PC-3 (cell line): ENCODE measurements at regions of chr7 and their contacts with region 1.

Region 1: DNA sequence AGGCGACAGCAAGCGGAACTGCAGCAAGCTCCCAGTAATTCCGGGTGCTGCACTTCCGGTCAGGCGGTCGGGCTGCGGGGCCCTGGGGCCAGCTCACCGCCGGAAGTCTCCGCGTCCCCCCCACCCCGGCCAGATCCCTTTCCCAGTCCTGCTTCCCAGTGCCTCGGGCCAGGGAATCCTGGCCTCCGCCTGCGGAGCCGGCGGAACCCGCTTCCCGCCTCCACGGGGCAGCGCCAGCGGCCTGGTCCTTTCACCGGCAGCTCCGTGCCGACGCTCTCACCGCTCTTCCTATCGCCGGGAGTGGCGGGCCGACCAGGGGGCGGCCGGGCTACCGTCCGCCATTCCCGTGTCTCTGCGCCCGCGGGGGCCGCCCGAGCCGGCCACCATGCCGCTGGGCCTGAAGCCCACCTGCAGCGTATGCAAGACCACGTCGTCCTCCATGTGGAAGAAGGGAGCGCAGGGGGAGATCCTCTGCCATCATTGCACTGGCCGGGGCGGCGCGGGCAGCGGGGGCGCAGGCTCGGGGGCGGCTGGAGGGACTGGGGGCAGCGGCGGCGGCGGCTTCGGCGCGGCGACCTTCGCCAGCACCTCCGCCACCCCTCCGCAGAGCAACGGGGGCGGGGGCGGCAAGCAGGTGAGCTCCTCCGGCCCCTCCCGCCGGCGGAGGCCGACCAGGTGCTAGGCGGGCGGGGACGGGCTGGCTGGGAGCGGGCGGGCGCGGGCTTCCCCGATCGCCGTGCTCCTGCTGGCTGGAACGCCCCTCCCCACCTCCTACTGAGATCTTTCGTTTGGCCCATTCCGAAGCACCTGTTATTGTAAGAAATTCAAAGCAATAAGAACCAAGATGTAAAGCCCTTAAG is at the start of gene GATAD1:
- DNase-seq: peak; percentile 89
- ATAC-seq: peak; percentile 90
- H3K4me3 ChIP-seq: peak within 1 kb of the TSS; percentile 93
- H3K27ac ChIP-seq: peak within 1 kb of the TSS; percentile 61
- H3K4me1 ChIP-seq: peaks cover 15% of the 10 kb centered on the region
- H3K27me3 ChIP-seq: no peaks in the 10 kb centered on the region
- CTCF ChIP-seq: peak; percentile 80
- total RNA-seq, gene GATAD1: 15.8 and 20.0 TPM in 2 replicates

Region 2: DNA sequence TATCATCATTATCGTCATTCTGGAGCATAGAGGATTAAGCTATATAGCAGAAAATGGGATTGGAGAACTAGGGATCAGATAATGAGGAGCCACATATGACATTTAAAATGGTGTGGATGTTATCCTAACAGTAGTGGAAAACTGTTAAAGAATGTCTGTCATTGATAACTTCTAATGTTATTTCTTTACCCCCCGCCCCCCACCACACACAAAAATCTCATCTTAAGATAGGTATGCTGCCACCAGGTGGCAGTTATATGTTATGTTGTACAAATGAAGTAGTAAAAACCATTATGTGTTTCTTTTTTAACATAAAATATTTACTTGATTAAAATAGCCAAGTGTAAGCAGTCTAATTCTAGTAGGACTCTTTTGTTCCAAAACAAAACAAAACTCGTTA is 494.0 kb before region 1 on chr7:
- CTCF ChIA-PET with region 1: no interaction called
- POLR2A ChIA-PET with region 1: no interaction called
- intact Hi-C with region 1: loop called (anchors 5 kb)
- DNase-seq: peak; percentile 18
- ATAC-seq: no peak
- H3K4me3 ChIP-seq: no peak overlapping the region
- H3K27ac ChIP-seq: no peak overlapping the region
- H3K4me1 ChIP-seq: peaks cover 14% of the 10 kb centered on the region
- H3K27me3 ChIP-seq: no peaks in the 10 kb centered on the region
- CTCF ChIP-seq: peak; percentile 66

Region 3: DNA sequence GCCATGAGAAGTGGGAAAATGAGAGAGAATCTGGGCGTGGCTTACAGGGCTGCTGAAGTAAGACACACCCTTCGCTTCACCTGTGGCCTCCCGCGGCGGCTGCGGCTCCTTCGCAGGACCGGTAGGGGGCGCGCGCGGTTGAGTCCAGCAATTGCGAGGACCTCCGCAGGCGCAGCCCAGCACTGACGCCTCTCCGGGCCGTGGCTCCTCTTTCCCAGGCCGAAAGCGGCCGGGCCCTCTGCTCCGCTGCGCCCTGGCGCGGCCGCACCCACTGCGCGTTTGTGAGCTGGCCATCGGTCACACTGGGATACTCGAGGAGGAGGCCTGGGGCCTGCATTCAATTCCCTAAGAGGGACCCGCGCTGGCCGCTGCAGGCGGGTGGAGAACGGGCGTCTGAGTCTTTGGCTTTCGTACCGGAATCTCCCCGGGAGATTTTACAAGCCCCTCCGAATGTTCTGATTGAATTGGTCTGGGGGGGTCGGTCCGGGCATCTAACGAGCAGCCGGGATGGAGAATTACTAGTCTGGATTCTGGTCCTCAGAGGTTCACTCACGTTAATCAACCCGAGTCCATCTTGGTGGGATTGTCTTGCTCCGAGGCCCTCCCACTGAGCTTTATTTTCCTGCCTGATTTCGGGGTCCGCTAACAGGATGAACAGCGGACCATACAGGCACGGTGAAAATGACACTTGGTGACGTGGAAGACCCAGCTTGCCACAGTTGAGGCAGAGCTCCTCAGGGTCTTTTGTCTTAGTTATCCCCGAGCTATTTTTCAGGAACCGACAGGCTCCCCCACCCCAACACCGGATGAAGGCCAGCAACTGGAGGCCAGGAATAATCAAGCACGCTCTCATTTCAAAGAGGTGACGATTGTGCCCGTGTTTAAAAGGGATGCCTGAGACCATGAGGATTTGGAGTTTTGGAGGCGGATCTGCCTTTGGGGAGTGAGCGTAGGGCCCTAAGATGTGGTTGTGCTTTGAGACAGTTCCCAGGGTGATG is 268.3 kb before region 1 on chr7 and contains the start of gene LRRD1:
- CTCF ChIA-PET with region 1: interaction called, 4 read pairs
- POLR2A ChIA-PET with region 1: no interaction called
- intact Hi-C with region 1: loop called (anchors 2 kb)
- DNase-seq: peak; percentile 86
- ATAC-seq: peak; percentile 98
- H3K4me3 ChIP-seq: peak within 1 kb of the TSS; percentile 63
- H3K27ac ChIP-seq: no peak within 1 kb of the TSS
- H3K4me1 ChIP-seq: peaks cover 9% of the 10 kb centered on the region
- H3K27me3 ChIP-seq: no peaks in the 10 kb centered on the region
- CTCF ChIP-seq: peak; percentile 88
- total RNA-seq, gene LRRD1: not detected in 2 replicates

Region 4: GRCh38 chr7:92425321-92425947 is 22.1 kb before region 1 on chr7:
- CTCF ChIA-PET with region 1: interaction called, 26 read pairs
- POLR2A ChIA-PET with region 1: no interaction called
- intact Hi-C with region 1: loop called (anchors 1 kb)
- DNase-seq: no peak
- ATAC-seq: no peak
- H3K4me3 ChIP-seq: no peak overlapping the region
- H3K27ac ChIP-seq: no peak overlapping the region
- H3K4me1 ChIP-seq: no peaks in the 10 kb centered on the region; the same call in 1 of the 2 replicates
- H3K27me3 ChIP-seq: no peaks in the 10 kb centered on the region
- CTCF ChIP-seq: no peak

Region 5: DNA sequence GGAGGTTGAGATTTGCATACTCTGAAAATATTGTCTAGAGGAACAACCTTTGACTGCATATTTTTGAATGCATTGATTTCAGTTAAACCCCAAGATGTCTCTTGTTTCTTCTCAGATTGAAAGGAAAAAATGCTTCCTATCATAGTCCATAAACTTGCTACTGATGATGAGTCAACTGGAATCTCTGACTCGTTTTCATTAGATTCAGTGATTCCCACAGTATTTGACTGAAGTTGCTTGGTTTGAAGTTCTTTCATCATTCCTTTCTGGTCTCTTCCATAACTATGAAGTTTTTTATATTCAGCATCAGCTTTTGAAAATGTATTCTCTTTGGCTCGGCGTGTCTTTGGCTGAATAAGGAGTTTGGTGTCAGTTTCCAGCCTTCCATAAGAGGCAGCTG is 70.1 kb after region 1 on chr7:
- CTCF ChIA-PET with region 1: no interaction called
- POLR2A ChIA-PET with region 1: no interaction called
- intact Hi-C with region 1: no loop called
- DNase-seq: peak; percentile 4
- ATAC-seq: no peak
- H3K4me3 ChIP-seq: no peak overlapping the region
- H3K27ac ChIP-seq: no peak overlapping the region
- H3K4me1 ChIP-seq: no peaks in the 10 kb centered on the region
- H3K27me3 ChIP-seq: no peaks in the 10 kb centered on the region
- CTCF ChIP-seq: no peak

Region 6: GRCh38 chr7:92528188-92528957 is 80.8 kb after region 1 on chr7 and contains the starts of genes PEX1 and RBM48:
- CTCF ChIA-PET with region 1: interaction called, 8 read pairs
- POLR2A ChIA-PET with region 1: interaction called, 12 read pairs
- intact Hi-C with region 1: no loop called
- DNase-seq: peak; percentile 98
- ATAC-seq: peak; percentile 94
- H3K4me3 ChIP-seq: peak within 1 kb of the TSS; percentile 84
- H3K27ac ChIP-seq: peak within 1 kb of the TSS; percentile 12
- H3K4me1 ChIP-seq: peaks cover 17% of the 10 kb centered on the region
- H3K27me3 ChIP-seq: no peaks in the 10 kb centered on the region
- CTCF ChIP-seq: peak; percentile 65
- total RNA-seq, gene PEX1: 6.2 and 8.5 TPM in 2 replicates
- total RNA-seq, gene RBM48: 5.7 and 8.2 TPM in 2 replicates